ENCODE measurements at regions of chr12 and their contacts with region 1.

Region 1: GRCh38 chr12:130013771-130014484 is 110.1 kb upstream of the TMEM132D start:
- DNase-seq: peak; percentile 27 to 42
- ATAC-seq: peak; percentile 50 to 66 (median 54)
- H3K4me3 ChIP-seq: no peak overlapping the region
- H3K4me3 Mint-ChIP-seq: no peak overlapping the region
- H3K27ac ChIP-seq: no peak overlapping the region
- H3K27ac Mint-ChIP-seq: no peak overlapping the region
- H3K4me1 ChIP-seq: no peaks in the 10 kb centered on the region
- H3K4me1 Mint-ChIP-seq: no peaks in the 10 kb centered on the region
- H3K27me3 ChIP-seq: no peaks in the 10 kb centered on the region
- H3K27me3 Mint-ChIP-seq: peaks cover 0 to 4% of the 10 kb centered on the region in 2 donors
- CTCF ChIP-seq: peak; percentile 50

Region 2: DNA sequence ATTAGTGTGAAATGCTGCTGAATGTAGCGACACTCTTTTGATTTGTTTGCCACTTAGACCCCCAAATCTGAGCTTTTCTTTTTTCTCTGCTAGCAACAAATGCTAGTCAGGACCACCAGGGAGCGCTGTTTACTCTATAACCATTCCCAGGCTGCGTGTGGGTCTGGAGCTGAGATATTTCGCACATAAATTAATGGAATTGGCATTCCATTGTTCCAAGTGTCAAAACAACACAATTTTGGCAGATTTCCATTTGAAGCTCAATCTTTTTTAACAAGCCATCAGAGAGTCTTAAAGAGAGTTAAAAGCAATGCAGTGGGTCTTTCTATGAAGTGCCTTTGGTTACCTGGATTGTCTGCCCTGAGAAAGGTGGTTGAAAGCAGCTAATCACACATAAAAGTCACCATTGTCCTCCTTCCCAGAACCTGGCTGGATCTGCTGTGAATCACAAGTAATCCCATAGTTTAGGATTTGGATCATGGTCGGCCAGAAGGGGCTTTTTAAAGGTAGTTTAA is 1754.3 kb before region 1 on chr12:
- intact Hi-C with region 1: loop called (anchors 5 kb)
- DNase-seq: peak; percentile 7 to 18
- ATAC-seq: no peak
- H3K4me3 ChIP-seq: no peak overlapping the region
- H3K4me3 Mint-ChIP-seq: no peak overlapping the region
- H3K27ac ChIP-seq: no peak overlapping the region
- H3K27ac Mint-ChIP-seq: no peak overlapping the region
- H3K4me1 ChIP-seq: no peaks in the 10 kb centered on the region
- H3K4me1 Mint-ChIP-seq: no peaks in the 10 kb centered on the region
- H3K27me3 ChIP-seq: peaks cover 1% of the 10 kb centered on the region
- H3K27me3 Mint-ChIP-seq: peaks cover 17 to 23% of the 10 kb centered on the region in 2 donors
- CTCF ChIP-seq: peak; percentile 71

Region 3: DNA sequence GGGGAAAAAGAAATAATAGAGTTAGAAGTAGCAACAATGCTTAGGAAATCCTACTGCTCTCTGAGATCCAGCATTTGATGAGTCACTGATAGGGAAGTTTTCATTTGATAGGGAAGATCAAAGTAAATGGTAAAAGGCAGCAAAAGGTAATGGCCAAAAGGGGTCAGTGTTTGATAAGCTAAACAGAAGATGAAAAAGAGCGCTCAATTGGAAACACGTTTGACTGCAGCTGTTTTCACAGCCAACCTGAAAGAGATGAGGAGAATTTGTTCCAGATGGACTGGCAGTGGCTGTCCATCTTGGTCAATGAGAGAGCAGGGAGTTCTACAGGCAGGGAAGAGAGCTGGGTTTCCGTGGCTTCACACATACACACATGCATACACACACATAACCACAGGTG is 1482.8 kb before region 1 on chr12:
- intact Hi-C with region 1: loop called (anchors 5 kb)
- DNase-seq: peak in 1 of 2 donors; percentile 9
- ATAC-seq: peak in 1 of 3 donors; percentile 40
- H3K4me3 ChIP-seq: no peak overlapping the region
- H3K4me3 Mint-ChIP-seq: no peak overlapping the region
- H3K27ac ChIP-seq: no peak overlapping the region
- H3K27ac Mint-ChIP-seq: no peak overlapping the region
- H3K4me1 ChIP-seq: no peaks in the 10 kb centered on the region
- H3K4me1 Mint-ChIP-seq: peaks cover 5 to 12% of the 10 kb centered on the region in 2 donors
- H3K27me3 ChIP-seq: no peaks in the 10 kb centered on the region
- H3K27me3 Mint-ChIP-seq: peaks cover 0 to 8% of the 10 kb centered on the region in 2 donors
- CTCF ChIP-seq: peak; percentile 25

Region 4: GRCh38 chr12:130053651-130054069 is 39.7 kb after region 1 on chr12:
- intact Hi-C with region 1: no loop called
- DNase-seq: no peak
- ATAC-seq: no peak
- H3K4me3 ChIP-seq: no peak overlapping the region
- H3K4me3 Mint-ChIP-seq: no peak overlapping the region
- H3K27ac ChIP-seq: no peak overlapping the region
- H3K27ac Mint-ChIP-seq: no peak overlapping the region
- H3K4me1 ChIP-seq: no peaks in the 10 kb centered on the region
- H3K4me1 Mint-ChIP-seq: peaks cover 0 to 11% of the 10 kb centered on the region in 2 donors
- H3K27me3 ChIP-seq: no peaks in the 10 kb centered on the region
- H3K27me3 Mint-ChIP-seq: peaks cover 0 to 2% of the 10 kb centered on the region in 2 donors
- CTCF ChIP-seq: no peak

Region 5: DNA sequence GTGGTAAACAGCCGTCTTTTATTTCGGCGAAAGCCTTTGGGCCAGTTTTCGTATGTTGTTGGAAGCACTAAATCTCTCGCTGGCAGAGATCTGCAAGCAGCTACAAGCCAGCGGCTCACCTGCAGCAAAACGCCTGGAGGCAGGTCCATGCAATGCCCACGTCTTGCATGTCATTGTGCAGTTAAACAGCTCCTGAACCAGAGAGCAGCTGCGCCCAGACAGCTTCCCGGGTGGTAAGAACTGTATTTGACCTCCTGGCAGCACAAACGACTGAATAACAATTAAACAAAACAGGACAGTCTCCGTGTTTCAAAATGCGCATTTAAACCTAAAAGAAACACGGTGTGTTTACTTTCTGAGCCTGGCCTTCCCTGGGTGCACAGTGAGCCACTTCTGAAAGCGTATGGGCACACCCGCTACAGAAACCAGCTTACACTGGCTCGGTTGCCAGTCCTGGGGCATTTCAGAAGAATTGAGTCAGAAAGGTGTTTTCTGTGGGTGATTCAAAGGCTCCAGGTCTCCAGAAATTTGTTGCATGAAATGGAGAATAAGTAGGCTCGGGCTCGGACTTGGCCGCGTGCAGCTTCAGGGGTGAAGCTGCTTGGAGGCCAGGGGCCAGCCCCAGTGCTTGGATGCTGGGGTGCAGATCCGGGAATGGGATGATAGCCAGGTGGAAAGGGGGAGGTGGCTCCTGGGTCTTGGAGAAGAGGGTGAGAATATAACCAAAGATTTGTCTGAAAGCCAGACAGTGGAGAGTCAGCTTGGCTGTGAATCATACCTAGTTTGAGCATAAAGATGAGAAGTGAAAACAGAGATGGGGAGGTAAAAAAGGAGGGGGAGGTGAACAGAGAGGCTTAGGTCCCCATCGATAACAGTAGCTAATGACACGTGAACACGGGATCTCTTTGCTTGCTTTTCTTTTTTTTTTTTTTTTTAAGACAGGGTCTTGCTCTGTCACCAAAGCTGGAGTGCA is 123.4 kb after region 1 on chr12:
- intact Hi-C with region 1: no loop called
- DNase-seq: no peak
- ATAC-seq: no peak
- H3K4me3 ChIP-seq: no peak overlapping the region
- H3K4me3 Mint-ChIP-seq: no peak overlapping the region
- H3K27ac ChIP-seq: no peak overlapping the region
- H3K27ac Mint-ChIP-seq: no peak overlapping the region
- H3K4me1 ChIP-seq: no peaks in the 10 kb centered on the region
- H3K4me1 Mint-ChIP-seq: no peaks in the 10 kb centered on the region
- H3K27me3 ChIP-seq: no peaks in the 10 kb centered on the region
- H3K27me3 Mint-ChIP-seq: peaks cover 0 to 5% of the 10 kb centered on the region in 2 donors
- CTCF ChIP-seq: no peak